Adrenal gland (tissue), 19 donors: ENCODE measurements at regions of chrX and their contacts with region 1.

Region 1: DNA sequence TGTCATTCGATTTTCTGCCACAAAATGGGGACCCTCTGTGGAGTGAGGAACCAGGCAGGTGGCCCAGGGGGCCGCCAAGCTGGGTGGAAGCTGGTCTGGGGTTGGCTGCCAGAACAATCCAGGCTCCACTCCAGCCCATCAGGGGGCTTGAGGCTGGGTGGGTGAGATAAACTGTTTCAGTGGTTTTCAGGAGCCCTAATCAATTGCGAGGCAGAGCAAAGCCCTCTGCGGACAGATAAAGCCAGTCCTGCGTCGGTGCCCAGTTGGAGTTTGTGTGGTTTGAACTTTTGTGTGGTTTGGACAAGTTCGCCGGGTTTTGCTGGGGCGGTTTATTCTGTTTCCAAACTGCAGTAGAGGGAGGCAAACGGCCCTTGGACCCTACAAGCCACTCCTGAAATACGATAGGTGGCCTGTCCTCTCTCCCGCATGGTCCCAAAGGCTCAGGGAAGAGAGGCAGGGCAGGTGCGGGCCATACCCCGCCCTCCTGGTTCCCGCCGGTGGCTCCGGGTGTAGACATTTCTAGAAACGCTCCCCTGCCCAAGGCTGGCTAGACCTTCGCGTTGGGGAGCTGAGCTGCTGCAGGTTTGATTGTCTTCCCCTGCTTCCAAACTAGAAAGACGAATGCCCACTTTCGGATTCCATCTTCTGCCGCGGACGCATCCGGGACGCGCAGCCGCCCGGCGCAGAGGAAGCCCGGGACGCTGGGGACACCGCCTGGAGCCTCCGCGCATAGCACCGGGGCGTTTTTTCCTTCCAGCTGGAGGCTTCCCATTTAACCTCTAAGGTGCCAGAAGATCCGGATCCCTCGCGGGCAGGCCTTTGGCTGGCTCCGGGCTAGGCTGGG is 169.0 kb upstream of the BCOR start:
- DNase-seq: peak; percentile 65 to 86 (median 77)
- H3K4me3 ChIP-seq: peak overlapping the region in 2 of 4 donors; percentile 13 to 41
- H3K27ac ChIP-seq: peak overlapping the region; percentile 60 to 90 (median 84)
- H3K4me1 ChIP-seq: peaks cover 12 to 28% of the 10 kb centered on the region in 2 donors
- H3K27me3 ChIP-seq: peaks cover 5% of the 10 kb centered on the region
- CTCF ChIP-seq: peak; percentile 20 to 73 (median 56)
- POLR2A ChIP-seq: peak in 1 of 2 donors; percentile 37

Region 2: GRCh38 chrX:39814391-39814790 is 452.3 kb before region 1 on chrX:
- intact Hi-C with region 1: loop called in 1 of 2 experiments (anchors 10 kb)
- DNase-seq: peak in 3 of 7 donors; percentile 50 to 66 (median 54)
- H3K4me3 ChIP-seq: no peak overlapping the region
- H3K27ac ChIP-seq: peak overlapping the region; percentile 62 to 94 (median 84)
- H3K4me1 ChIP-seq: no peaks in the 10 kb centered on the region
- H3K27me3 ChIP-seq: peaks cover 4% of the 10 kb centered on the region
- CTCF ChIP-seq: peak; percentile 15 to 62 (median 46)
- POLR2A ChIP-seq: no peak

Region 3: DNA sequence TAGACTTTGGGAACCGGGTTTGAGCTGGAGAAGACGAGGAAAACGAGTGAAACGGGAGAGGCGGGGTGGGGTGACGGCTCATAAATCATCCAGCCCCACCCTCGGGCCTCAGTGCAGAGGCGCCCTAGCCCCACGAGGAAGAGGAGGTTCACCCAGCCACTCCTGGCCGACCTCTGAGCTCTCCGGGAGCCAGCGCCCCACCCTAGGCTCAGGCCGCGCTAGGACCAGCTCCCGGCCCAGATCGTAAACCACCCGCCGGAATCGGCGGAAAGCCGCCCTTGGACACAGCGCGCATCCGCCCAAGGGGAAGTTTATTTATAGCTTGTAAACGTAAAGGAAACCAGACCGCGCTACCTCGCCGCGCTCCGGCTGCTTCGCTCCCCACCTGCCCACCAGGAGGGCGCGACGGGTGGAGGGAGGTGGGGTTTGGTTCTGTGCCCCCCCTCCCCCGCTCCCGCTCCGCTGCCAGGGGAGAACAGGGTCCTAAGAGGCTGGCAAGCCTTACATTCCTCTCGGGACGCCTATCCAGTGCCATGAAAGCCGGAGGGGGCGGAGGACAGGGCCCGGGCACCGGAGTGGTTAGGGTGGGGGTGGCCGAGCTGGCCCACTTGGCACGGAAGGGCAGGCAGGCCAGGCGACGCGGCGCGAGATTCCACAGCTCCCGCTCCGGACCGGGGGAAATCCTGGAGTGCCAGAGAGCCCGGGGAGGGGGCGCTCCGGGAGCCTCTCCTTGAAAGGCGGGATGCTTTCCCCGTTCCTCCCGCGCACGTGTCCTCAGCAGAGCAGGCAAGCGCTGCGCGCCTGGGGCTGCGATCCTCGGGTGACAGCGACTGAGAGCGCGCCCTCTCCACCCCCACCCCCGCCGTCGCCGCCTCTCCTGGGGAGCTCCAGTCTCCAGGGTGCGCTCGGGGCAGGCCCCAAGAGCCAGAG is 253.2 kb before region 1 on chrX:
- intact Hi-C with region 1: no loop called
- DNase-seq: peak; percentile 58 to 73 (median 65)
- H3K4me3 ChIP-seq: peak overlapping the region in 2 of 4 donors; percentile 37 to 63
- H3K27ac ChIP-seq: peak overlapping the region; percentile 64 to 94 (median 84)
- H3K4me1 ChIP-seq: peaks cover 0 to 13% of the 10 kb centered on the region in 2 donors
- H3K27me3 ChIP-seq: peaks cover 38% of the 10 kb centered on the region
- CTCF ChIP-seq: no peak
- POLR2A ChIP-seq: peak in 1 of 2 donors; percentile 1

Region 4: DNA sequence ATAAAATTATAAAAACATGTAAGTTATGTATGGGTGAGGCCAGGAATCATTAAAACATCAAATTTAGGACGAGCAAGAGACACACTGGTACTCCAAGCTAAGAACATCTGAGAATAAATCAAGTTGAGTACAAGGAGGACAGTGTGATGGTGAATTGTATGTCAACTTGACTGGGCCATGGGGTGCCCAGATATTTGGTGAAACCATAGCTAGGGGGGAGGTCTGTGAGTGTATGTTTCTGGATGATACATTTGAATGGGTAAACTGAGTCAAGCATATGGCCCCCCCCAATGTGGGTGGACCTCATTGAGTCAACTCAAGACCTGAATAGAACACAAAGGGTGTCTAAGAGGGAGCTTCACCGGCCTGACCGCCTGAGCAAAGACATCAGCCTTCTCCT is 53.6 kb before region 1 on chrX:
- intact Hi-C with region 1: no loop called
- DNase-seq: no peak
- H3K4me3 ChIP-seq: no peak overlapping the region
- H3K27ac ChIP-seq: no peak overlapping the region
- H3K4me1 ChIP-seq: no peaks in the 10 kb centered on the region
- H3K27me3 ChIP-seq: no peaks in the 10 kb centered on the region
- CTCF ChIP-seq: no peak
- POLR2A ChIP-seq: no peak